Ascending aorta (tissue), 2 donors: ENCODE measurements at regions of chr4 and their contacts with region 1.

Region 1: DNA sequence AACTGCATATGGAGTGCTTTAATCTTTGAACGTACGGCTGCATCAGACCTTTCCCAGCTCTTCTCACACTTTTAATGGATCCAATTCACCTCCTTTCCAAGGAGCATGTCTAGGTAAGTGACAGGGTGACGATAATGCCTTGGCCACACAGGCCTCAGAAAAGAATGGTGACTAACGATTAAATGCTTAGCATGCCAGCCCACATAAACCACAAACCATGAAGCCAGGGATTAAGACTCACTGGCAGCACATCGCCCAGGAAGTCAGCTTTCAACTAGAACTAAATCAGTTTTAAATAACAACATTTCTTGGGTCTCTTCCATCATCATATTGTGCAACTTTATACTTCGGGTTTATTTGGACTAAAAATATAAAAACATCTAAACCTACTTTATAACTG is 28.7 kb downstream of the INPP4B start:
- DNase-seq: peak in 1 of 2 donors; percentile 81
- H3K4me3 ChIP-seq: peak overlapping the region; percentile 0 to 37
- H3K27ac ChIP-seq: peak overlapping the region; percentile 65 to 66
- H3K4me1 ChIP-seq: peaks cover 0 to 10% of the 10 kb centered on the region in 2 donors
- H3K27me3 ChIP-seq: no peaks in the 10 kb centered on the region
- CTCF ChIP-seq: no peak

Region 2: DNA sequence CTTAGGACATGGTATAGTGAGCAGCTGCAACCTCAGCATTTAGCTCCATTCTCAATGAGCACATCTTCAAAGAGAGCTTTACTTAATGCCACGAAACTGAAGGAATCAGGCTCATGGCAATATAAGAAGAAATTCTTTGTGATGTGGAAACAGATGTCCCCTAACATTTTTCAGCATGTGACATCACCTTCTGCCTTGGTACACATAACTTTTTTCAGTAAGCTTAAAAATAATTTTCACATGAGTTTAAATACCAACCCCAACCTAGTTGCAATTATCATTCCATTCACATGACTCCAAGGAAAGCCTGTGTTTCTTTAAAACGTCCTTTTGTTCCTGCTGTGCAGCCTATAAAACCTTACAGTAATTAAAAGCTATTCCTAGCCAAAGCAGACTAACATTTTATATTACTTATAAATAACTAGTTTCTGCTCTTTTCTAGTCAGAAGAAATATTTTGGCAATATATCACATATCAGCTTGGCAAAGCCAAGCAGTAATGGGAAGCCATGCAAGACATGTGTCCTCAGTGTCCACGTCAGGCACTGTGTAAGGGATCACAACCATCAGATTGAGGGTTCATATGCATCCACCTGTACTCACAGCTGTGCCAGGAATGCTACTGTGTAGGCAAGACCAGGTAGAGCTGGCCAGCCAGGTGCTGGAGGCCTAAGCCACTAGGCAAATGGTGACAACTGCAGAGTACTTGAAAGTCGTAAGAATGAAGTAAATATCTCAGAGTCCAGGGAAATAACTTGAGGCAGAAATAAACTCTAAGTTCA is 438.0 kb before region 1 on chr4:
- intact Hi-C with region 1: loop called (anchors 5 kb)
- DNase-seq: no peak
- H3K4me3 ChIP-seq: no peak overlapping the region
- H3K27ac ChIP-seq: peak overlapping the region; percentile 61 to 71
- H3K4me1 ChIP-seq: peaks cover 4 to 18% of the 10 kb centered on the region in 2 donors
- H3K27me3 ChIP-seq: no peaks in the 10 kb centered on the region
- CTCF ChIP-seq: no peak

Region 3: DNA sequence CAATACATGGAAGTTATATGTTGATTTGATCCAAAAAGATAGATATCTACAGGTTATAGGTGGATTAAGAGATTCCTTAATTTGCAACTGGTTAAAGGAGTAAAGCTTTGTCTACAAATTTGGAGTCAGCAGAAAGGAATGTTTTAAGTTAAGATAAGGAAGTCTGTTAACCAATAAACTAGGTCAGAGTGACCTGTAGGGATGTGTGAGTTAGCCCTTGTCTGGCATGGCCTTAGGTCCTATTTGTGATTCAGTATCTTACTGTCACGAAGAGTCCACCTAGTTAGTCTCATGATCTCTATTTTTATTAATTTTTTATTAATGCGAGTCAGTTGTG is 202.2 kb before region 1 on chr4:
- intact Hi-C with region 1: no loop called
- DNase-seq: no peak
- H3K4me3 ChIP-seq: no peak overlapping the region
- H3K27ac ChIP-seq: no peak overlapping the region
- H3K4me1 ChIP-seq: no peaks in the 10 kb centered on the region
- H3K27me3 ChIP-seq: no peaks in the 10 kb centered on the region
- CTCF ChIP-seq: no peak

Region 4: GRCh38 chr4:142846729-142847596 is 29.5 kb after region 1 on chr4:
- intact Hi-C with region 1: loop called (anchors 2 kb)
- DNase-seq: peak in 1 of 2 donors; percentile 69
- H3K4me3 ChIP-seq: peak overlapping the region; percentile 77 to 78
- H3K27ac ChIP-seq: peak overlapping the region; percentile 79 to 84
- H3K4me1 ChIP-seq: peaks cover 0 to 5% of the 10 kb centered on the region in 2 donors
- H3K27me3 ChIP-seq: no peaks in the 10 kb centered on the region
- CTCF ChIP-seq: peak; percentile 5 to 53 (median 32)

Region 5: GRCh38 chr4:143230683-143231082 is 413.2 kb after region 1 on chr4:
- intact Hi-C with region 1: no loop called
- DNase-seq: no peak
- H3K4me3 ChIP-seq: no peak overlapping the region
- H3K27ac ChIP-seq: no peak overlapping the region
- H3K4me1 ChIP-seq: no peaks in the 10 kb centered on the region
- H3K27me3 ChIP-seq: no peaks in the 10 kb centered on the region
- CTCF ChIP-seq: no peak

Region 6: GRCh38 chr4:143358923-143359643 is 541.6 kb after region 1 on chr4:
- intact Hi-C with region 1: loop called (anchors 10 kb)
- DNase-seq: no peak
- H3K4me3 ChIP-seq: peak overlapping the region; percentile 14 to 27
- H3K27ac ChIP-seq: peak overlapping the region; percentile 79 to 83
- H3K4me1 ChIP-seq: peaks cover 13 to 65% of the 10 kb centered on the region in 2 donors
- H3K27me3 ChIP-seq: no peaks in the 10 kb centered on the region
- CTCF ChIP-seq: no peak